BJ (cell line): ENCODE measurements at regions of chr11 and their contacts with region 1.

Region 1: DNA sequence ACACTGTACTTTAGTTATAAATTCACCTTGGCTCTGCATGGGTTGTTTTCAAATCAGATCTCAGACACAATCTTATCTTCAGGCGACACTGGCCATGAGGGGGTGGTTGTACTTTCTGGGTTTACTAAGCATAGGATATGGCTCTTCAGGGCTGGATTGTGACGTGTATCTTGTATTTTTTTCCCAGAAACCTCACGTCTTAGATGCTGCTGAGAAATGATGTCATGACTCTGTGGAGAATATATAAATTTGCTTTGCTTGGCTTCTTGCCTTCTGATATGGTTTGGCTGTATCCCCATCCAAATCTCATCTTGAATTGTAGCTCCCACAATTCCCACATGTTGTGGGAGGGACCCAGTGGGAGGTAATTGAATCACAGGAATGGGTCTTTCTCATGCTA is 82.8 kb upstream of the VSTM5 start:
- DNase-seq: no peak
- H3K4me3 ChIP-seq: no peak overlapping the region
- H3K27me3 ChIP-seq: peaks cover 3% of the 10 kb centered on the region; the same call in 1 of the 2 replicates
- CTCF ChIP-seq: no peak

Region 2: GRCh38 chr11:93921695-93922468 is 11.3 kb before region 1 on chr11:
- CTCF ChIA-PET with region 1: interaction called, 13 read pairs
- POLR2A ChIA-PET with region 1: no interaction called
- DNase-seq: no peak
- H3K4me3 ChIP-seq: no peak overlapping the region
- H3K27me3 ChIP-seq: peaks cover 5% of the 10 kb centered on the region
- CTCF ChIP-seq: peak; percentile 83

Region 3: DNA sequence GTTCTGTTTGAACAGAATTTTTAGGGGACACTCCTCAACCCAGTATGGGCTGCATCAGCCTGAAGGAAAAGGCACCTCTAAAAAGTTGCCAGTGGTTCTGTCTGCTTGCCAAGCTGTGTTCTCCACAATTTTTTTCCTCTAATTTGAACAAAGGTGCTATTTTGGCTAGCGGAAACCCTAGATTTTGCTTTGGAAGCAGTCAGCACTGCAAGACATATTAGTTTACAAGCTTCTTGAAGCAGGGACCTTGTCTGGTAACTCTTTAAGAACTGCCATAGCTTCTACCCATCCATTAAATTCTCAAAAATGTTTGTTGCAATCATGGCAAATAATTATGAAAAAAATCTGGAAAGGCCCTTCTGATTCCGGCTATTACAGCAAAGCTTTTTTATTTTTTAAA is 12.4 kb after region 1 on chr11:
- CTCF ChIA-PET with region 1: no interaction called
- POLR2A ChIA-PET with region 1: no interaction called
- DNase-seq: no peak
- H3K4me3 ChIP-seq: no peak overlapping the region
- H3K27me3 ChIP-seq: no peaks in the 10 kb centered on the region
- CTCF ChIP-seq: no peak

Region 4: DNA sequence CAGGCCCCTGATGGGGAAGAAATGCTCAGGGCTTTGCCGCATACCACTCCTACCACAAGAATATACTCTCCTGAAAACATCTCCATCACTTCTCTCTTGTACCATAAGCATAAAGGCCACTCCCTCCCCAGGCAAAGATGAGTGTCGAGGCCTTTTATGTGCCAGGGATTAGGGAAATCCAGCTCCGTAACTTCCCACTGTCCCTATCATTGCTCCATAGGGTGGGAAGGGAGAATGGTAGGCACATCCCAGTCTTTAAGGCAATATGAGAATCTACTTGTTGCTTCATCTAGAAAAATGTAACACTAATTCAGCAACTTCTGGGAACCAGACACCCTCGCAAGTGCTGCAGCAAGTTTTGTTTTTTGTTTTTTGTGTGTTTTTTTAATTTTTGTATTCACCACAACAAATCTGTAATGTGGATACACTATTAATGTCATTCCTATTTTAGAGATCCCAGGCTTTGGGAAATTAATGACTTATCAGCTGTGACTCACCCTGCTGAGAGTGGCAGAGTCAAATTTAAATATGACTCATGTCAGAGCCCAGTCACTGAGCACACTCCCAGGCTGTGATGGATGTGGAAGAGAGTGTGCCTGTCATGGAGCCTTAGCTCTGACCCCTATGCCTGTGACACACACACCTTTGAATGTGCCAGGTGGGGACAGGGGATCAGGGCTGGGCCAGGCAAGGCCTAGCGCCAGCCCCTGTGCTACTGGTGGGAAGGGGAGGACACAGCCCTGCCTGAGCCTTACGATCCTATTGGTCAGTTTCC is 218.9 kb after region 1 on chr11:
- CTCF ChIA-PET with region 1: no interaction called
- POLR2A ChIA-PET with region 1: no interaction called
- DNase-seq: peak; percentile 52
- H3K4me3 ChIP-seq: no peak overlapping the region
- H3K27me3 ChIP-seq: no peaks in the 10 kb centered on the region
- CTCF ChIP-seq: no peak